Caco-2 (cell line): ENCODE measurements at regions of chr1 and their contacts with region 1.

Region 1: DNA sequence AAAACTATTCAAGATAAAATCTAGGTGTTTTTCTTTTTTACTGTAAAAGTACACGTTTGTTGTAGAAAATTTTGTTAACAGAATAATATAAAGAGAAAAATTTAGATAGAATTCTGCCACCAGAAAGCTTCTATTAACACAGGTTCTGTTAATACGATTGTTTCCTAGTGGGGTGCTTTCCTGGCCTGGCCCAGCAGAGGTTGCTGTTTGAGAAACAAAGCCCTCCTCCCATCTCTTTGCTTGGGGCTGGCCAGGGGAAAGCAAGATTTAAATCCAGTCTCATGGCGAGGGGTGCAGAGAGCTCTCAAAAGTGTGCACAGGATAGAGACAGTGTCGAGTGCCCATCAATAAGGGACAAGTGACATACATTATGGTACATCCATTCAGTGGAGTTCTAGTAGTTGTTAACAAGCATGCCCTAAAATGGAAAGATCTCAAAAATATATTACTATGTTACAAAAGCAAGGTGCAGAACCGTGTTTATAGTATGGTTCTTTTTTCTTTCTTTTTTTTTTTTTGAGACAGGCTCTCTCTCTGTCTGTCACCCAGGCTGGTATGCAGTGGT is 14.6 kb upstream of the ACBD3 start:
- DNase-seq: peak in 1 of 2 experiments; percentile 22
- H3K4me3 ChIP-seq: no peak overlapping the region
- H3K4me3 Mint-ChIP-seq: no peak overlapping the region
- H3K27ac Mint-ChIP-seq: no peak overlapping the region
- H3K4me1 ChIP-seq: no peaks in the 10 kb centered on the region
- H3K4me1 Mint-ChIP-seq: no peaks in the 10 kb centered on the region
- H3K27me3 ChIP-seq: no peaks in the 10 kb centered on the region
- H3K27me3 Mint-ChIP-seq: no peaks in the 10 kb centered on the region
- CTCF ChIP-seq: peak in 1 of 2 experiments; percentile 48

Region 2: GRCh38 chr1:224569276-224569675 is 1631.8 kb before region 1 on chr1:
- CTCF ChIA-PET with region 1: interaction called, 11 read pairs
- POLR2A ChIA-PET with region 1: no interaction called
- intact Hi-C with region 1: no loop called
- DNase-seq: no peak
- H3K4me3 ChIP-seq: no peak overlapping the region
- H3K4me3 Mint-ChIP-seq: no peak overlapping the region
- H3K27ac Mint-ChIP-seq: no peak overlapping the region
- H3K4me1 ChIP-seq: no peaks in the 10 kb centered on the region
- H3K4me1 Mint-ChIP-seq: peaks cover 8% of the 10 kb centered on the region
- H3K27me3 ChIP-seq: no peaks in the 10 kb centered on the region
- H3K27me3 Mint-ChIP-seq: peaks cover 6% of the 10 kb centered on the region
- CTCF ChIP-seq: no peak

Region 3: DNA sequence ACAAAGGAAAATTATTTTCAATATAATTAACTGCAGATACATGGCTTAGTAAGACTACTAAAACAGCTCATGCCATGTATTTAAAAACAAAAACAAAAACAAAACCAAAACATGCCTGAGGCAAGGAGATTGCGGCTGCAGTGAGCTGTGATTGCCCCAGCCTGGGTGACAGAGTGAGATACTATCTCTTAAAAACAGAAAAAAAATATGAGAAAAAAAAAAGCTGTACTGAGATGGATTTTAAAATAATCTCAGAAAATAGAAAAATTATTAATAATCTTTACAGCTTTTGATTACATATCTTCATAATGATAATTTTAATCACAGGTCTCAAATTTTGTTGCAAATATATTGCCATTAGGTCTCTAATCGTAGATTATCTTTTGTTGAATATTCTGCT is 131.8 kb after region 1 on chr1:
- CTCF ChIA-PET with region 1: interaction called, 7 read pairs
- POLR2A ChIA-PET with region 1: no interaction called
- intact Hi-C with region 1: loop called (anchors 2 kb)
- DNase-seq: no peak
- H3K4me3 ChIP-seq: no peak overlapping the region
- H3K4me3 Mint-ChIP-seq: peak overlapping the region; percentile 70
- H3K27ac Mint-ChIP-seq: no peak overlapping the region
- H3K4me1 ChIP-seq: no peaks in the 10 kb centered on the region
- H3K4me1 Mint-ChIP-seq: no peaks in the 10 kb centered on the region
- H3K27me3 ChIP-seq: no peaks in the 10 kb centered on the region
- H3K27me3 Mint-ChIP-seq: no peaks in the 10 kb centered on the region
- CTCF ChIP-seq: no peak